Dendritic cell treated with granulocyte-macrophage colony-stimulating factor and Interleukin-4, amounts not matched to agents 40 ng/mL and 50 ng/mL, for 4 days (primary cell): ENCODE measurements at regions of chr3 and their contacts with region 1.

Region 1: GRCh38 chr3:31768479-31769123 is 212.5 kb downstream of the OSBPL10 start:
- H3K4me3 Mint-ChIP-seq: no peak overlapping the region
- H3K27ac Mint-ChIP-seq: peak overlapping the region; percentile 24
- H3K4me1 Mint-ChIP-seq: peaks cover 39% of the 10 kb centered on the region
- H3K27me3 Mint-ChIP-seq: peaks cover 1% of the 10 kb centered on the region

Region 2: GRCh38 chr3:30779686-30780287 is 988.8 kb before region 1 on chr3:
- intact Hi-C with region 1: loop called (anchors 5 kb)
- H3K4me3 Mint-ChIP-seq: no peak overlapping the region
- H3K27ac Mint-ChIP-seq: no peak overlapping the region
- H3K4me1 Mint-ChIP-seq: peaks cover 25% of the 10 kb centered on the region
- H3K27me3 Mint-ChIP-seq: no peaks in the 10 kb centered on the region

Region 3: DNA sequence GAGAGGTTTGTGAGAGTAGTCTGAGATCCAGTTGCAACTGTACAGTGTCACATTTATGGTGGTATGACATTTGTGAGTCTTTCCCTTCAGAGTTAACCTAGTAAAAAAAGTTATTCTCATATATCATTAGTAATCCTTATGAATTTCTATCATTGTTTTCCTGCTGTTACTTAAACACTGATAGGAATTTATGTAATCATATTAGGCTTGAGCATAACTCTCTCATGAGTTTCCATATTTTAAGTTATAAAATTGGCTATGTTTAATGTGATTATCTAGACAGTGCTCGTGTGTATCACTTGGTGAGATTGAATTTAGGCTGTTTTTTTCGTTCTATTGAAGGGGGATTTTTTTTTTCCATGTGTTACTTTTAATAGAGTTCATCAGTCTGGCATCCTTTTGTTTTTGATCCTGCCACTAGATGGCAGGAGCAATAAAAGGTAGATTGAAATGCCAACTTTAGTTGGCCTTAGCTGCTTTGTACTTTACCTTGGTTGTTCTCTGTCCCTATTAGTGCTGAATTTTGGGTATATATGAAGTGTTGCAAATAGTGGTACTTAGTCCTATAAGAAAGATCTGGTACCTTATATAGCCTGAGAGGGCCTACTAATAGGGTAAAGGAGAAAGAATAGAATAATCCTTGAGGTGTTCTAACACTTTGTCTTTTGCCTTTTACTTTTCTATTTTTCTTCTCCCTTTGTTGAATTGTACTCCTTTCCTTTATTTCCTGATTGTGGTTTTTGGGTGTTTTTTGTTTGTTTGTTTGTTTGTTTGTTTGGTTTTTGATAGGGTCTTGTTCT is 217.9 kb before region 1 on chr3:
- intact Hi-C with region 1: loop called (anchors 5 kb)
- H3K4me3 Mint-ChIP-seq: no peak overlapping the region
- H3K27ac Mint-ChIP-seq: no peak overlapping the region
- H3K4me1 Mint-ChIP-seq: peaks cover 59% of the 10 kb centered on the region
- H3K27me3 Mint-ChIP-seq: no peaks in the 10 kb centered on the region

Region 4: DNA sequence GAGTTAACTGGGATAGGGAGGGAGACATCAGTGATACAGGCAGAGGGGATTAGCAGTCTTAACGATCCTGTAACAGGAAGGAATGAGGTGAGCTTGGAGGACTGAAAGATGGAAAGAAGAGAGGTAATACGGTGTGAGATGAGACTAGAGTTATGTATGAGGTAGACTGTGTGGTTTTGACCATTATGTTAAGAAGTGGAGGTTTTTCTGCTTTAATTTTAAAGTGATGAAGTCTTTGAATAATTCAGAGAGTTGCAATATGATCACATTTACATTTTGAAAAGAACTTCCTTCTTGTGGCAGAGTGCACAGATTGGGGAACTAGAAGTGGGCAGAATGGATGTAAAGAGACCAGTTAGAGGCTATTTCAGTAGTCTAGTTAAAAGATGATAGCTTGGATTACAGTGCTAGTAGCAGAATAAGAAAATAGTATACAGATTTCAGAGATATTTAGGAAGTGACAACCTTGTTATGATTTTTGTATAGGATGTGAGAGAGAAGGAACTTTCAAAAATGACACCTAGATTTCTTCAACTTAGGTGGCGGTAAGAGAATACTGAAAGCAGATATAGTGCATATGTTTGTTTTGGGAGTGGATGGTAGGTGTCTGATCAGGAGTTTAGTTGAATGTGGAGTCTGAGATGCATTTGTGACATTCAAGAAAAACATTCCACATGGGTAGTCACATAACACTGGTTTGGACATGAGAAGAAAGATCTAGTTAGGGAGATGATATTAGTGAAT is 195.4 kb before region 1 on chr3:
- intact Hi-C with region 1: no loop called
- H3K4me3 Mint-ChIP-seq: no peak overlapping the region
- H3K27ac Mint-ChIP-seq: no peak overlapping the region
- H3K4me1 Mint-ChIP-seq: peaks cover 40% of the 10 kb centered on the region
- H3K27me3 Mint-ChIP-seq: no peaks in the 10 kb centered on the region

Region 5: DNA sequence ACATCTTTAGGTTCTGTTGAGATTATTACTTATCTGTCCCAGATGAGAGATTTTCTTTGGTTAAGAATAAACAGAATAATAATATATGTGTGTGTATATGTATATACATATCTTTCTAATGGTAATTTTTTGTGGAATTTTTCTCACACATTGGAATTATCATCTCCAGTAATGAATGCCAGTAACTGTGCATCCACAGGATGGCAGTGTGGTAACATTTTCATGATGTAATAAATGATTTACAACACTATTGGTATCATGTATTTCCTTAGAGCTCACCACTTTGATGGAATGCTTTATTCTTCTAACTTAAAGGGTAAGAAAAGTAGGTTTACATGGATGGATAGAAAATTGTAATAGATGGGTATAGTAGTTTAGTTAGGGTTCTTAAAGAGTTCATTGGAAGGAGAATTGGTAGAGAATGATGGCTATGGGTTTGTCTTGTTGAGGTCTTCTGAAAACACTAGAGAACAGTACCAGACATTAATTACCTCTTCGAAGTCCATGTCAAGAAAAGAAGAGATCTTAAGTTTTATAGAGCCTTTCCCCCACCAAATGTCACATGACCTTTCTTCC is 157.8 kb before region 1 on chr3:
- intact Hi-C with region 1: loop called (anchors 1 kb)
- H3K4me3 Mint-ChIP-seq: no peak overlapping the region
- H3K27ac Mint-ChIP-seq: no peak overlapping the region
- H3K4me1 Mint-ChIP-seq: peaks cover 26% of the 10 kb centered on the region
- H3K27me3 Mint-ChIP-seq: no peaks in the 10 kb centered on the region

Region 6: GRCh38 chr3:31880020-31880419 is 111.4 kb after region 1 on chr3:
- intact Hi-C with region 1: no loop called
- H3K4me3 Mint-ChIP-seq: no peak overlapping the region
- H3K27ac Mint-ChIP-seq: no peak overlapping the region
- H3K4me1 Mint-ChIP-seq: no peaks in the 10 kb centered on the region
- H3K27me3 Mint-ChIP-seq: no peaks in the 10 kb centered on the region